Heart left ventricle (tissue), 16 donors: ENCODE measurements at regions of chr9 and their contacts with region 1.

Region 1: DNA sequence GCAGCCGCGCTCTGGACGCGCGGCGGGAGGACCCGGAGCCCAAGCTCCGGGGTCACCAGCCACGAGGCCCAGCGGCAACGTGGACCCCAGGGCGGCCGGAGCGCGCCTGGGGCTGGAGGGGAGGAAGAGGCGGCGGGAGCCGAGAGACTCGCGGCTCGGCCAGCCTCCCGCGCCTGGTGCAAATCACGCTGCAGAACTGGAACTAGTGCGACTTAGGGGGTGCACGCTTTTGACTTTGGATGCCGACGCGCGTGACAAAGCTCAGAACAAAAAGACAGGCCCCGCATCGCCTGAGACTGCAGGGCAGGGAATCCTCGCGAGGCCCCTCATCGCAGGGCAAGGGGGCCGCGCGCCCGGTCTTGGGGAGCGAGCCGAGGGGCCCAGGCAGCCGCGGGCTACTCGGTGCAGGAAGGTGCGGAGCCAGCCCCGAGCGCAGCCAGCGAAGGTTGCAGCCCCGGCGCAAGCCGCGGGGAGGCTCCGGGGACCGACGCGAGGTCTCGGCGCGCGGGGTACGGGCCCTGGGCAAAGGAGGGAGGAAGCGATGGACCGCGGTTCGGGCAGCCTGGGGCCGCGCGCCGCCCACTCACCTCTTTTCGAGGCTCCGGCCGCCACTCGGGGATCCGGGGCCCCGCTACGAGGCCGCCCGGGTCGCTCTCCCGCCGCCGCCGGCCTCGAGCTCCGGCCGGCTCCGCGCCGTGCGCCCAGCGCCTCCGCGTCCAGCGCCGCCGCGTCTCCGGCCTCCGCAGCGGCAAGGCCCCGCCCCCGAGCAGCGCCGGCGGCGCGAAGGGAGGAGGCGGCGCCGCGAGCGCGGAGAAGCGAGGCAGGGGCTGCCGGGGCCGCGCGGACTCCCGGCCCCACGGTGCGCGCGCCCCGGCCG is at the start of gene GOLM1:
- DNase-seq: peak; percentile 35 to 68 (median 54)
- ATAC-seq: peak; percentile 47 to 91 (median 77)
- H3K4me3 ChIP-seq: peak within 1 kb of the TSS; percentile 47 to 90 (median 74)
- H3K27ac ChIP-seq: peak within 1 kb of the TSS in 10 of 12 donors; percentile 48 to 81 (median 70)
- H3K4me1 ChIP-seq: peaks cover 0 to 21% (median 9%) of the 10 kb centered on the region in 12 donors
- H3K27me3 ChIP-seq: peaks cover 0 to 2% (median 0%) of the 10 kb centered on the region in 9 donors
- CTCF ChIP-seq: peak in 3 of 12 donors; percentile 18 to 30 (median 23)
- POLR2A ChIP-seq: peak in 1 of 2 donors; percentile 7
- total RNA-seq, gene GOLM1: 2.1 to 16.8 (median 3.8) TPM

Region 2: DNA sequence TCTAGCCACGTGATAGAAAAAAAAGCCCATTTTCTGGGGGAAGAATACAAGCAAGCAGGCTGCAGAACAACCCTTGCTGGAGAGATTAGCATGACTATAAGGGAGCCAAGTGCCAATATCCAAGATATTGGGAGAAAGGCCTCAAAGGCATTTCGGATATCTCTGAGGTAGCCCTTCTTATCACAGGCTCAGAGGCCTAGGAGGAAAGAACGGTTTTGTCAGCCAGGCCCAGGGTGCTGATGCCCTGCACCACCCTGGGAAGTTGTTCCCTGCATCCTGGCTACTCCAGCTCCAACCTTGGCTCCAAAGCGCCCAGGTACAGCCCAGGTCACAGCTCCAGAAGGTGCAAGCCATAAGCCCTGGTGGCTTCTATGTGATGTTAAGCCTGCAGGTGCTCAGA is 94.0 kb after region 1 on chr9:
- intact Hi-C with region 1: loop called in 1 of 10 experiments (anchors 10 kb)
- DNase-seq: no peak
- ATAC-seq: no peak
- H3K4me3 ChIP-seq: no peak overlapping the region
- H3K27ac ChIP-seq: no peak overlapping the region
- H3K4me1 ChIP-seq: no peaks in the 10 kb centered on the region
- H3K27me3 ChIP-seq: no peaks in the 10 kb centered on the region
- CTCF ChIP-seq: no peak
- POLR2A ChIP-seq: no peak